MCF 10A (cell line): ENCODE measurements at regions of chr4 and their contacts with region 1.

Region 1: GRCh38 chr4:118034053-118034785 is at the start of gene NDST3:
- DNase-seq: peak; percentile 88
- H3K4me3 Mint-ChIP-seq: peak within 1 kb of the TSS; percentile 64
- H3K27ac Mint-ChIP-seq: no peak within 1 kb of the TSS
- H3K4me1 Mint-ChIP-seq: no peaks in the 10 kb centered on the region
- H3K27me3 Mint-ChIP-seq: peaks cover 4% of the 10 kb centered on the region
- CTCF ChIP-seq: peak; percentile 63
- total RNA-seq, gene NDST3: not detected in 2 replicates

Region 2: DNA sequence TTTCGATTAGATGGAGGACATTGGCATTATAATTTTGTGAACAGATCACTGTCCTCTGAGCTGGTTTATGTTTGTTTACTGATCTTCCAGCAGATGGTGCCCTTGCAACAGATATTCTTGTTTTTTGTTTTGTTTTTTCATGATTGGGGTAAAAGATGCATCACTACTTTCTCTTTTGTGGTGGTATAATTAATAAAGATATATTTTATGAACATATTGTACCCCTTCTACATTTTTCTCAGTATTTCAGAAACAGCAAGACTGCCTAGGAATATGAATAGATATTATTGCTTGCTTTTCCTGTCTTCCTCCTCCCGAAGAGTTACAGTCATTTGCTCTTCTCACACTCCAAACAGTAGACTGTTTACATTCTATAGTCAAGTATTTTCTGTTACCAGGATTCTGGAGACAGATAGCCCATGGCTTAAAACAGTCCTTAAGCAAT is 1854.0 kb before region 1 on chr4:
- CTCF ChIA-PET with region 1: interaction called, 5 read pairs
- POLR2A ChIA-PET with region 1: no interaction called
- intact Hi-C with region 1: loop called (anchors 5 kb)
- DNase-seq: peak; percentile 46
- H3K4me3 Mint-ChIP-seq: no peak overlapping the region
- H3K27ac Mint-ChIP-seq: no peak overlapping the region
- H3K4me1 Mint-ChIP-seq: no peaks in the 10 kb centered on the region
- H3K27me3 Mint-ChIP-seq: peaks cover 15% of the 10 kb centered on the region
- CTCF ChIP-seq: peak; percentile 52

Region 3: DNA sequence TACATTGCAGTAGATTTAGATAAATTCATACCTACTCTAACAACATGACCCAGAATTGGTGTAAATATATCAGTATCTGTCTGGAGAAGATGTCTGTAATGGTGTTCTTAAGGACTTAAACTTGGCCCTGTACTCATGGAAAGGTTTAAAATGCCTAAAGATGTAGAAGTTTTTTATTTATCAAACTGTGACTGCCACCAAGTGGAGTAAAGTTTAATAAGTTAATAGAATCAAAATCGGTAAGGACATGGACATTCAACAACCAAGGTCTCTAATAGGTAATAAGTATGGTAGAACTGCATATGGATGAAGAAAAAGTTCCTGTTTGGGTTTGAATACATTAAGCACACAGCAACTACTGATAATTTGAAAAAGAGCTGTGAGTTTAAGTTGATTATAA is 473.9 kb before region 1 on chr4:
- CTCF ChIA-PET with region 1: interaction called, 13 read pairs
- POLR2A ChIA-PET with region 1: interaction called, 3 read pairs
- intact Hi-C with region 1: loop called (anchors 2 kb)
- DNase-seq: peak; percentile 45
- H3K4me3 Mint-ChIP-seq: no peak overlapping the region
- H3K27ac Mint-ChIP-seq: no peak overlapping the region
- H3K4me1 Mint-ChIP-seq: no peaks in the 10 kb centered on the region
- H3K27me3 Mint-ChIP-seq: no peaks in the 10 kb centered on the region
- CTCF ChIP-seq: peak; percentile 18

Region 4: GRCh38 chr4:117678861-117679260 is 355.4 kb before region 1 on chr4:
- CTCF ChIA-PET with region 1: no interaction called
- POLR2A ChIA-PET with region 1: no interaction called
- intact Hi-C with region 1: loop called (anchors 5 kb)
- DNase-seq: no peak
- H3K4me3 Mint-ChIP-seq: no peak overlapping the region
- H3K27ac Mint-ChIP-seq: no peak overlapping the region
- H3K4me1 Mint-ChIP-seq: no peaks in the 10 kb centered on the region
- H3K27me3 Mint-ChIP-seq: no peaks in the 10 kb centered on the region
- CTCF ChIP-seq: no peak

Region 5: GRCh38 chr4:118046323-118046722 is 12.1 kb after region 1 on chr4:
- CTCF ChIA-PET with region 1: interaction called, 16 read pairs
- POLR2A ChIA-PET with region 1: no interaction called
- intact Hi-C with region 1: no loop called
- DNase-seq: no peak
- H3K4me3 Mint-ChIP-seq: no peak overlapping the region
- H3K27ac Mint-ChIP-seq: no peak overlapping the region
- H3K4me1 Mint-ChIP-seq: no peaks in the 10 kb centered on the region
- H3K27me3 Mint-ChIP-seq: no peaks in the 10 kb centered on the region
- CTCF ChIP-seq: no peak

Region 6: GRCh38 chr4:118076958-118077766 is 42.9 kb after region 1 on chr4:
- CTCF ChIA-PET with region 1: no interaction called
- POLR2A ChIA-PET with region 1: no interaction called
- intact Hi-C with region 1: no loop called
- DNase-seq: peak; percentile 59
- H3K4me3 Mint-ChIP-seq: no peak overlapping the region
- H3K27ac Mint-ChIP-seq: no peak overlapping the region
- H3K4me1 Mint-ChIP-seq: no peaks in the 10 kb centered on the region
- H3K27me3 Mint-ChIP-seq: no peaks in the 10 kb centered on the region
- CTCF ChIP-seq: peak; percentile 62

Region 7: DNA sequence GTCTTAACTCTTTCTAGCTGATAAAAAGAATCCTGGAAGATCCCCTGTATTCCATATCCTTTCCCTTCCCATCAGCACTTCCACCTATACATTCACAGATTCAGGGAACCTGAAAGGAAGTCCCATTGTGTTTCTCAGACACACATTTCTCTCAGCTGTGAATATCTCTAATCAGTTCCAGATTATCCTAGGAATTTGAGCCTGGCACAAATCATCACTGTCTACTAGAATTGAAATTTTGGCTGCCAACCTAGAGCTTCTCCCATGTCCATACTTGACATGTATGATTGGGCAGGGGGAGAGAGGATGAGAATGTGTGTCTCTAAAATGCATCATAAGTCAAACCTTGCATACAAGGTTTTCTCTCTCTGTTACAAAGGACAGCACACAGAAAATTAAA is 53.1 kb after region 1 on chr4:
- CTCF ChIA-PET with region 1: no interaction called
- POLR2A ChIA-PET with region 1: no interaction called
- intact Hi-C with region 1: no loop called
- DNase-seq: no peak
- H3K4me3 Mint-ChIP-seq: no peak overlapping the region
- H3K27ac Mint-ChIP-seq: no peak overlapping the region
- H3K4me1 Mint-ChIP-seq: peaks cover 9% of the 10 kb centered on the region
- H3K27me3 Mint-ChIP-seq: no peaks in the 10 kb centered on the region
- CTCF ChIP-seq: no peak

Region 8: GRCh38 chr4:118224239-118224829 is 190.1 kb after region 1 on chr4:
- CTCF ChIA-PET with region 1: interaction called, 10 read pairs
- POLR2A ChIA-PET with region 1: no interaction called
- intact Hi-C with region 1: loop called (anchors 5 kb)
- DNase-seq: peak; percentile 75
- H3K4me3 Mint-ChIP-seq: no peak overlapping the region
- H3K27ac Mint-ChIP-seq: no peak overlapping the region
- H3K4me1 Mint-ChIP-seq: no peaks in the 10 kb centered on the region
- H3K27me3 Mint-ChIP-seq: no peaks in the 10 kb centered on the region
- CTCF ChIP-seq: peak; percentile 70